Activated CD4-positive, alpha-beta T cell treated with anti-CD3 and anti-CD28 coated beads for 36 hours (primary cell): ENCODE measurements at regions of chr6 and their contacts with region 1.

Region 1: GRCh38 chr6:39302669-39303424 is 11.4 kb downstream of the KCNK17 start:
- DNase-seq: peak; percentile 96
- ATAC-seq: peak; percentile 98
- H3K4me3 Mint-ChIP-seq: peak overlapping the region; percentile 44
- H3K27ac Mint-ChIP-seq: no peak overlapping the region
- H3K4me1 Mint-ChIP-seq: peaks cover 4% of the 10 kb centered on the region
- H3K27me3 Mint-ChIP-seq: no peaks in the 10 kb centered on the region

Region 2: DNA sequence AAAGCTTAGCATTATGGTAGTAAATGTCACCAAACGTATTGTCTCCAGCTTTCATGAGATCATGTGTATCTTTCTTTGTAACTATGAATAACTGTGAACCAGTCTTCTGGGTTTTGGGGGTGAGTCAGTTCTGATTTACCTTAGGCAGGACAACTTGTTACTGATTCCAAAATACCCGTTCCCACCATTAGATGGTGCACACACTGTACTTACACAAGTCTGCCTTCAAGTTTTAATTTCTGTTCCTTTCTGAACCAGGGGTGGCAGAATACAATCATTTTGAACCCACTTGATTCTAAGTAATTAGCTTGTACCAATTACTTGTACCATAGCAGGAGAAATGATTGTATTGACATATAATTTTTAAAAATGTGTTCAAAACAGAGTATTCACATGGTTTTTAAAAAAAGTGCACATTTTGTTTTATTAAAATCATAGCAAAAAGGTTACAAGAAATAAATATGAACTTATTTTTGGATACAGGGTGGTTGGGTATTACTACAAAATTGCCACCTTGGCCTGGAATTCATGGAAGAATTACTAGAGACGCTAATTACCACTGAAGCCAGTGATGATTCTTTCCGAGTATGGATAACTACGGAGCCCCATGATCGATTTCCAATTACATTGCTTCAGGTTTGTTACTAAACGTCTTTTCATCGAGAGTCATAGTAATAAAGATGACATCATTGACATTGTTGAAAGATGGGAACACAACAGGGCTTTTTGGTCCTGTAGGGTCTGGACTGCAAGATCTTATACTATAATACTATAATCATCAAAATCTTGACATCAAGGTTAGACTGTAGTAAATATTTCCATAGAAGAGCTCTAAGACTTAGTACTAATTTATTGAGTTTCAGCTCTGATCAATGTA is 329.4 kb before region 1 on chr6:
- CTCF ChIA-PET with region 1: interaction called, 25 read pairs
- POLR2A ChIA-PET with region 1: no interaction called
- intact Hi-C with region 1: loop called (anchors 1 to 2 kb)
- DNase-seq: peak; percentile 51
- ATAC-seq: peak; percentile 99
- H3K4me3 Mint-ChIP-seq: no peak overlapping the region
- H3K27ac Mint-ChIP-seq: no peak overlapping the region
- H3K4me1 Mint-ChIP-seq: peaks cover 3% of the 10 kb centered on the region
- H3K27me3 Mint-ChIP-seq: peaks cover 19% of the 10 kb centered on the region

Region 3: DNA sequence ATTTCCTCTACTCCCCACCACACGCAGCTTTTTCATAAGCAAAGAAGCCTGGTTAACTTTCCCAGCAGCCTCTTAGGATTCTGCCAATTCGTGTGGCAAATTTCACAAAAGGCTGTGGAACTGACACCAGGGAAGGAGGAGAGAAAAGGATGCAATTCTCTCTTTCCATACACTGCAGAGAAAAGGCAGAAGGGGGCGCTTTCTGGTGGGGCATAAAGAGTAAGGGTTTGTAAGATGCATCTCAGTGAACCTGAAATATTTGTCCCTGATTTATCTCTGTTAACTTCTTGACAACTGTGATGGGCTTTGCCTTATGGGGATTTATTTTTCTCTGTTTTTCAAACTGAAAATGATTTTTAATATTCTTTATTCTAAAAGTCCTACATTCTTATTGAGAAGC is 299.8 kb before region 1 on chr6:
- CTCF ChIA-PET with region 1: interaction called, 27 read pairs
- POLR2A ChIA-PET with region 1: no interaction called
- intact Hi-C with region 1: no loop called
- DNase-seq: peak; percentile 48
- ATAC-seq: no peak
- H3K4me3 Mint-ChIP-seq: no peak overlapping the region
- H3K27ac Mint-ChIP-seq: no peak overlapping the region
- H3K4me1 Mint-ChIP-seq: no peaks in the 10 kb centered on the region
- H3K27me3 Mint-ChIP-seq: peaks cover 30% of the 10 kb centered on the region

Region 4: DNA sequence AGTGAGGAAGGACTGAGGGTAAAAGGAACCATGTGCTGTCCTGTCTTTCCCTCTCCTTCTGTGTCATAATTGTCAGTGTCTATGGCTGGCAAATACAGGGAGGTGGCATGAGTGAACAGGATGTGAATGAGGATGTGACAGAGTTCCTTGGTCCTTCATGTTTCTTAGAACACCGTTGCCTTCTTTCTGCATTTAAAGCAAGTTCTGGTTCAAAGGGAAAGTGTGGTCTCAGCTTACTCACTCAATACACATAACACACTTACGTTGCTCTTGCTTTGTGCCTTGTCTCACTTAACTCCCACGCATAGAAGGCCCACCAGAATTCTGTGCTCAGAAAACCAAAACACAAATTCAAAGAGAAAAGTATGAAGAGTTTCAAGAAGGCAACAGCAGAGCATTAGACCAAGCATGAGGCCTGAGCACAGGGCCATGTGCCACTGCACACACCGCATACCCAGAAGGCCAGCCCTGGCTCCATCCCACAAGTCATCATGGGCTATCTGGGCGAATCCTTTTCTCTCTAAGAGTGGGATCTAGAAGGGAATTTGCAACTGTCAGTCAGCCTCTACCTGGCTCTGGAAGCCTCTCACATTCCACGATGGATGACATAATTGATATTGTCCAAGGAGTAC is 149.0 kb before region 1 on chr6:
- CTCF ChIA-PET with region 1: interaction called, 18 read pairs
- POLR2A ChIA-PET with region 1: no interaction called
- intact Hi-C with region 1: no loop called
- DNase-seq: peak; percentile 63
- ATAC-seq: peak; percentile 94
- H3K4me3 Mint-ChIP-seq: no peak overlapping the region
- H3K27ac Mint-ChIP-seq: peak overlapping the region; percentile 84
- H3K4me1 Mint-ChIP-seq: peaks cover 52% of the 10 kb centered on the region
- H3K27me3 Mint-ChIP-seq: peaks cover 10% of the 10 kb centered on the region

Region 5: GRCh38 chr6:39182604-39183003 is 120.2 kb before region 1 on chr6:
- CTCF ChIA-PET with region 1: interaction called, 11 read pairs
- POLR2A ChIA-PET with region 1: no interaction called
- intact Hi-C with region 1: no loop called
- DNase-seq: no peak
- ATAC-seq: no peak
- H3K4me3 Mint-ChIP-seq: no peak overlapping the region
- H3K27ac Mint-ChIP-seq: no peak overlapping the region
- H3K4me1 Mint-ChIP-seq: no peaks in the 10 kb centered on the region
- H3K27me3 Mint-ChIP-seq: no peaks in the 10 kb centered on the region